ENCODE measurements at regions of chr12 and their contacts with region 1.

Region 1: DNA sequence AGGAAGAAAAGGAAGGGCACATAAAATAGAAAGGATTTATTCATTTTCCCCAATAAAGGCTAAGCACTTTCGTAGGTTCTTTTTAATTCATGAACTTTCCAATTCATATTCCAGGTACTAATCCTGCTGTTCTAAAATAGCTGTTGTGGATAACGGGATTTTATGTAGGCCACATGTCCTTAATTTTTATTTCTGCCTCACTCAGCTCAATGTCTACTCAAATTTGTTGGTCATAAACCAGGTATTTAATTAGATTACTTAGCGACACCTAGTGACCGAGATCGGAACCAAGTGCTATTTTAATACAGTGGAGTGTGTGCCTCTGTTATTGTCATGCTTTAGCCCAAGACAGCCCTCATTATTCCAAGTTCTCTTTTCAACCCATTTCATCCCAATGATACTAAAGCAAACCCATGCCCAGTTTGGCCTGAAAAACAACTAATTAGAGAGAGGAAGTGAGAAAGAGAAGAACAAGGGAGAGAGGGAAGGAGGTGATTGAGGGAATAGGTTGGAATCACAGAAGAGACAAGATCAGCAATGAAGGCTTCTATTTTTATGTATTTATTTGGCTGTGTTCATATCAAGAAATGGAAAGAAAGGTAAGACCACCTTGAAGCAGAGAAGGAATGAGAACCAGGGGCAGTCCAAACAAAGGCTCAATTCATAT is 45.9 kb upstream of the IFNG-AS1 start:
- DNase-seq: peak; percentile 34 to 83
- ATAC-seq: peak; percentile 79

Region 2: DNA sequence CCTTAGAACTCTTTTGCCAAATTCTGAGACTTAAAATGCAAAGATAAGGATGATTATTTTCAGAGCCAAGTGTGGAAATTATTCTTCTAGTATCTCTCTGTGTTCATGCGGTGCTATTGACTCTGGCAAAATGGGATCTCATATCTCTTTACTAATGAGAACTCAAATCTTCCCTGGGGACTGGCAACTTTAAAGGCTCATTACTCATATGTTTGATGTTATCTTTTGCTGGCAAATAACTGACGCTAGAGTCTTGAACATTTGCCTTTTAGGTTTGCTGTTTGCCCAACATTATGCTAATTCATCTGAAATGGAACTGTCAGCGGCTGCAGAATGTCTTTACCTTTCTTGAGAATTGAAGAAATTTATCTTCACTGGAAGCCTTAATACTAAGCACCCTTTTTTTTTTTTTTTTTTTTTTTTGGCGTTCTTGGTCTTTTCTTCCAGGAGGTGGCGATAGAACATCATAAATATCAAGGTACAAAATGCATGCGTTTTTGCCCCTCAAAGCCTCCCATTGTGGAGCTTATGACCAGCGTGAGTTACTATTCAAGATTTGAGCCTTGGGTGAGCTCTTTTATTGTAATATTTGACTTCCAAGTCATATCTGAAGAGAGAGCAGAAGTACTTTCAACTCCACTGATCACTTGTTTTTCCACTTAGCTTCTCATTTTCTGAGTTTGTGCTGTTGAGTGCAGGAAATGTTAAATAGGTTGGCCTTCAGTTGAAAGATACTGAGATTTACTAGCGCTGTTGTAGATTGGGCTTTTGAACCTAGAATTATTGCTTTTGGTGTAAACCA is 587.6 kb before region 1 on chr12:
- intact Hi-C with region 1: loop called (anchors 5 to 10 kb)
- DNase-seq: no peak
- ATAC-seq: peak; percentile 77

Region 3: DNA sequence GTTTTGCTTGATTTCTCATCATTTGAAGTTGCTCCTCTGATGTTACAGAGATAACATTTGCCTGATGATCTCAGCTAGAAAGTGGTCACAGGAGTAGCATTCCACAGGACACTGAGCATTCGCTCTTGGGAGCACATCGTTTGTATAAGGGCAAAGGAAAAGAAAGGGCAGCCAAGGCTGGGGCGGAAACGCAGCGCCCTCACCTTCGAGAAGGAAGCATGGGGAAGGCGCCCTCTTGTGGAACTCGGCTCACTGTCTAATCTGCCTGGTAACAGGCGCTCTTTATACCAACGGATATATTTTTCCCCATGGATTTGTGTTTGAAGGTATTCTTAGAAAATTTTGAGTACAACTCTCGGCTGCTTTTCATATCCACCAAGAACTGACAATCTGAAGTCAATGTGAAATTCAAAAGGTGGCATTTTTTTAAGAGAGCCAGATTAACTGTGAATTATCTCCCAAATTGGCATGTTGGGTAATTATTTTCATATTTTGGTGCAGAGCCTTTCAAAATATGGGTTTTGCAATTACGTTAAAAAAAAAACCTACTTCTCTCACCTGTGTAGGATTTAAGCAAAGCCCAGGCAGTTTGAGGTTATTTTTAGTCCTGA is 501.5 kb before region 1 on chr12:
- intact Hi-C with region 1: loop called in 1 of 2 experiments (anchors 10 kb)
- DNase-seq: peak; percentile 84 to 97
- ATAC-seq: peak; percentile 97

Region 4: GRCh38 chr12:67648521-67649260 is 294.7 kb before region 1 on chr12 and contains the start of gene DYRK2:
- intact Hi-C with region 1: loop called in 1 of 2 experiments (anchors 5 kb)
- DNase-seq: peak; percentile 77 to 89
- ATAC-seq: peak; percentile 56
- total RNA-seq, gene DYRK2: 98.5 to 144 TPM

Region 5: DNA sequence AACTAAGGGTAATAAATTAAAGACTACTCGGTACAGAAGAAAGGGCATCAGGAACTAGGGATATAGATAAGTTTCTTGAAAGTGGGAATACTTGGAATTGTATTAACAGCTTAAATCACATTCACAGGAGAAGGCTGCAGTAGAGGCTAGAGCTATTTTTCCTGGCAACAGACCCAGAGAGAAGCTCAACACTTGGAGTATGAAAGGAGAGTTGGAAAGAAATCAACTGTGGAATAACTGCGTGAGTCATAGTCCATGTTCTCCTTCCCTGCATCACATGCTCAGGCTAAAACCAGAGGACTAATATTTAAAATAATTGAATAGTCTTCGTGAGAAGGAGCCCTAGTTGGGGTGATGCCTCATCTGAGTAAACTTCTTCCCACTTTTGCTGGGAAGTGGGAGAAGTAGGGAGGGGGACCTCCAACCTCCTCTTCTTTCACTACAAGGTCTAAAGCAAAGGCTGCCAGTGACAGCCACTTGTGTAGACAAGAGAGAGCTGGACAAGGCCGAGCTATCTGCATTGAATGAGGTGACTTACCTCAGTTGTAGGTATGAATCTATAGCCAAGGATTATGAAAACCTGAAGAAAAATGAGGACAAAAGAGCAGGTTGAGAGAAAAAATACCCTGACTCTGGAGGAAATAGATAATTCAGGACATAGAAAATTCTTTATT is 262.1 kb before region 1 on chr12:
- intact Hi-C with region 1: no loop called
- DNase-seq: no peak
- ATAC-seq: no peak

Measured in left colon (tissue), 2 donors.